Activated B cell treated with CpG ODN at 0.5 μM for 24 hours (primary cell): ENCODE measurements at regions of chr1 and their contacts with region 1.

Region 1: GRCh38 chr1:48817505-48818114 is 40.9 kb upstream of the BEND5 start:
- DNase-seq: peak; percentile 50
- ATAC-seq: peak; percentile 81
- H3K4me3 Mint-ChIP-seq: no peak overlapping the region
- H3K27ac Mint-ChIP-seq: no peak overlapping the region
- H3K4me1 Mint-ChIP-seq: peaks cover 17% of the 10 kb centered on the region
- H3K27me3 Mint-ChIP-seq: no peaks in the 10 kb centered on the region
- CTCF ChIP-seq: no peak

Region 2: GRCh38 chr1:48552420-48552819 is 265.2 kb before region 1 on chr1:
- CTCF ChIA-PET with region 1: interaction called, 9 read pairs
- POLR2A ChIA-PET with region 1: no interaction called
- intact Hi-C with region 1: loop called (anchors 1 kb)
- DNase-seq: no peak
- ATAC-seq: no peak
- H3K4me3 Mint-ChIP-seq: no peak overlapping the region
- H3K27ac Mint-ChIP-seq: no peak overlapping the region
- H3K4me1 Mint-ChIP-seq: no peaks in the 10 kb centered on the region
- H3K27me3 Mint-ChIP-seq: no peaks in the 10 kb centered on the region
- CTCF ChIP-seq: no peak

Region 3: DNA sequence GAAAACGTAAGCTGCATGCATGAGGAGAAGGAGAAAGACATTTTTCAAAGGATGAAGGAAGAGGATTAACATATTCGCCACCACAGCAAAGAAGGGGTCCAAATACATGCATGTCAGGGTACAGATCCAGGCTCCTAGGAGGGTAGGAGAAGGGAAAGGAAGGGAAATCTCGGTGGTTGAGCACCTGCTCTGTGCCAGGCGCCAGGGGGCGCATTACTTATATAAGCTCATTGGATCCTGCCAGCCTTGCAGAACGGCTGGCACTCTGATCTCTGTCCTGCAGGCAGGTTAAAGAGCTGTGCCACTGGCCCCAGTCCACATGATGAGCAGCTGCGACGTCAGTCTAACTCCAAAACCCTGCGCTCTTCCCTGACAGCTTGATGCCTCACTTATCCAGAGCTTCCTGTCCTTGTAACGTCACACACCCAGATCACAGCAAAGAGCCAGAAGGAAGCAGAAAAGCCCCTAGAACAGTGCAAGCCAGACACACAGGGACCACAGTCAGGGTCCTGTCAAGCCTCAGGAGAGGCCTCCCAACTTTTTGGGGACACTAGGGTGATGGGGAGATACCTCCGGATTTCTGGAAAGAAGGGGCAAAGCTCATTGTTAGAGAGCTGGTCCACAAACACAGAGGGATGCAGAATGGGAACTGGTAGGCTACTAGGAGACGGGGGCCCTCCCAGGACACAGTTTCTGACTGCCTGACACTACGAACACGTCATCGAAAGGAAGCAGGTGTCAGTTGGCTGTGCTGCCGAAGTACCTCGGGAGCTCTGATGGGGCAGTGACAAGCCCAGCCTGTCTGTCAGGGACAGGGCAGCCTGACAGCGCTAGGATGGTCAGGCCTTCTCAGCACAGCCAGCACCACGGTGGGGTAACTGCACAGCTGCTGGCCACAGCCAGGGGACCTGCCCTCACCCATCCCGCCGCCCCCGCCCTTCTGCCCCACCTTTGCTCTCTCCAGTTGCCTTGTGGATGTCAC is 140.0 kb before region 1 on chr1:
- CTCF ChIA-PET with region 1: interaction called, 192 read pairs
- POLR2A ChIA-PET with region 1: interaction called, 7 read pairs
- intact Hi-C with region 1: loop called (anchors 1 kb)
- DNase-seq: peak; percentile 31
- ATAC-seq: peak; percentile 68
- H3K4me3 Mint-ChIP-seq: no peak overlapping the region
- H3K27ac Mint-ChIP-seq: no peak overlapping the region
- H3K4me1 Mint-ChIP-seq: peaks cover 8% of the 10 kb centered on the region
- H3K27me3 Mint-ChIP-seq: peaks cover 18% of the 10 kb centered on the region
- CTCF ChIP-seq: peak; percentile 68

Region 4: DNA sequence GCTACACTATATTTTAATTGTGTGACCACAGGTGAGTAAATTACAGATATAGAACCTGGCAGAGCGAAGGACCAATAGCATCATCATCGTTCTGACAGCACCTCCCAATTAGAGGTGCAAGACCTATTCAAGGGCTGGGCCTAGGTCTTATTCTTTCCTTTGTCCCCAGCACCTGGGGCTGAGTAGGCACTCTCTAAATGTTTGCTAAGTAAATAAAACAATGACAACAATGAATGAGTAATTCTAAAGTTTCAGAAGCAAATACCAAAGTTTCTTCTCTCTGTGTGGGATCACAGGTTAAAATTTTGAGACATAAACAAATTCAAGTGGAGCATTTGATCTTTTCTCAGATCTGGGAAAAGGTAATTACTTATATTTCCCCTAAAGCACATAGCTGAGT is 73.5 kb before region 1 on chr1:
- CTCF ChIA-PET with region 1: interaction called, 57 read pairs
- POLR2A ChIA-PET with region 1: interaction called, 3 read pairs
- intact Hi-C with region 1: no loop called
- DNase-seq: no peak
- ATAC-seq: no peak
- H3K4me3 Mint-ChIP-seq: no peak overlapping the region
- H3K27ac Mint-ChIP-seq: no peak overlapping the region
- H3K4me1 Mint-ChIP-seq: peaks cover 3% of the 10 kb centered on the region
- H3K27me3 Mint-ChIP-seq: no peaks in the 10 kb centered on the region
- CTCF ChIP-seq: no peak

Region 5: DNA sequence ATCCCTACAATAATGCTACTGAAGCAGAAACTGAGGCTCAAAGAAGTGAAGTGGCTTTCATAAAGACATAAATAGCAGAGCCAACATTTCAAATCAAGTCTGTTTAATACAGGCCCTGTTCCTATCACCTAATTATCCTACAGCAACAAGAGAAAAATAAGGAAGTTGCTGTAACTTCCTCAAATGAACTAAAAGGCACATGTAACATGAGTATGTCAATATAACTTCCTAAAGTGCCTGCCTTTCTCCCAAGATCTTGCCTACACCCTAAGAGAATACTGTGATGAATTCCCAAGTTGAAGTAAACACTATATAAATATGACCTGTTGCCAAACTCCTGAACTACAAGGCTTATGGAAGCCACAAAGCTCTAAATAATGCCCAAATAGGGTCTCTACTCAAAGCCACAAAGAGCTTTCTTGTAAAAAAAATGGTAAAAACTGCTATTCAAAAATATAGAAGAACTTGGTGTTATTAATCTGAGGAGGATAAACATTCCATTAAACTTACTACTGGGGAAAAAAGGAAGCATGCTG is 49.6 kb before region 1 on chr1:
- CTCF ChIA-PET with region 1: interaction called, 40 read pairs
- POLR2A ChIA-PET with region 1: no interaction called
- intact Hi-C with region 1: no loop called
- DNase-seq: no peak
- ATAC-seq: peak; percentile 79
- H3K4me3 Mint-ChIP-seq: peak overlapping the region; percentile 44
- H3K27ac Mint-ChIP-seq: peak overlapping the region; percentile 80
- H3K4me1 Mint-ChIP-seq: peaks cover 93% of the 10 kb centered on the region
- H3K27me3 Mint-ChIP-seq: no peaks in the 10 kb centered on the region
- CTCF ChIP-seq: no peak

Region 6: DNA sequence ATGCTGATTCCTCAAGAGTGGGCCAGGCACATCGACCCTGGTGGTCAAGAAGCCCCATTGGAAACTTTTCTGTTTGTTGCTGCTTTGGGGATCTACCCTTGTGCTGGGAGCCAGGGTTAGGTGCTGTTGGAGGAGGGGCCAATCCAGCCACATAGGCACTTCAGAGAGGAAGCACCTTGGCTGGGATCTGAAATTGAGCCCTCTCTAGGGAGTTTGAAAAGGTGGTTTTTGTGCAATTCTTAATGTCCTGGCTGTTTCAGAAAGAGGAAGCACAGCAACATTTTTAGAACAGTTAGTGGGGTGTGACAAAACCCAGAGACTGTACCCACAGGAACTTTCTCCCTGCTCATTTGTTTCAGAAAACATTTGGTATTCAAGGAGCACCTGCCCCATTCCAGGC is 23.7 kb before region 1 on chr1:
- CTCF ChIA-PET with region 1: interaction called, 19 read pairs
- POLR2A ChIA-PET with region 1: no interaction called
- intact Hi-C with region 1: loop called (anchors 1 kb)
- DNase-seq: peak; percentile 42
- ATAC-seq: peak; percentile 95
- H3K4me3 Mint-ChIP-seq: peak overlapping the region; percentile 71
- H3K27ac Mint-ChIP-seq: peak overlapping the region; percentile 90
- H3K4me1 Mint-ChIP-seq: peaks cover 89% of the 10 kb centered on the region
- H3K27me3 Mint-ChIP-seq: no peaks in the 10 kb centered on the region
- CTCF ChIP-seq: no peak

Region 7: GRCh38 chr1:48988633-48989197 is 171.1 kb after region 1 on chr1:
- CTCF ChIA-PET with region 1: no interaction called
- POLR2A ChIA-PET with region 1: no interaction called
- intact Hi-C with region 1: no loop called
- DNase-seq: no peak
- ATAC-seq: no peak
- H3K4me3 Mint-ChIP-seq: no peak overlapping the region
- H3K27ac Mint-ChIP-seq: no peak overlapping the region
- H3K4me1 Mint-ChIP-seq: no peaks in the 10 kb centered on the region
- H3K27me3 Mint-ChIP-seq: peaks cover 4% of the 10 kb centered on the region
- CTCF ChIP-seq: no peak

Region 8: GRCh38 chr1:48999321-48999720 is 181.7 kb after region 1 on chr1:
- CTCF ChIA-PET with region 1: no interaction called
- POLR2A ChIA-PET with region 1: no interaction called
- intact Hi-C with region 1: no loop called
- DNase-seq: no peak
- ATAC-seq: no peak
- H3K4me3 Mint-ChIP-seq: no peak overlapping the region
- H3K27ac Mint-ChIP-seq: no peak overlapping the region
- H3K4me1 Mint-ChIP-seq: no peaks in the 10 kb centered on the region
- H3K27me3 Mint-ChIP-seq: peaks cover 5% of the 10 kb centered on the region
- CTCF ChIP-seq: no peak